ENCODE measurements at regions of chr22 and their contacts with region 1.

Region 1: GRCh38 chr22:39927544-39927943 is 26.7 kb downstream of the GRAP2 start:
- DNase-seq: peak; percentile 73
- ATAC-seq: peak; percentile 45
- H3K4me3 Mint-ChIP-seq: no peak overlapping the region
- H3K27ac Mint-ChIP-seq: no peak overlapping the region
- H3K4me1 Mint-ChIP-seq: peaks cover 30% of the 10 kb centered on the region
- H3K27me3 Mint-ChIP-seq: no peaks in the 10 kb centered on the region
- CTCF ChIP-seq: peak; percentile 67

Region 2: DNA sequence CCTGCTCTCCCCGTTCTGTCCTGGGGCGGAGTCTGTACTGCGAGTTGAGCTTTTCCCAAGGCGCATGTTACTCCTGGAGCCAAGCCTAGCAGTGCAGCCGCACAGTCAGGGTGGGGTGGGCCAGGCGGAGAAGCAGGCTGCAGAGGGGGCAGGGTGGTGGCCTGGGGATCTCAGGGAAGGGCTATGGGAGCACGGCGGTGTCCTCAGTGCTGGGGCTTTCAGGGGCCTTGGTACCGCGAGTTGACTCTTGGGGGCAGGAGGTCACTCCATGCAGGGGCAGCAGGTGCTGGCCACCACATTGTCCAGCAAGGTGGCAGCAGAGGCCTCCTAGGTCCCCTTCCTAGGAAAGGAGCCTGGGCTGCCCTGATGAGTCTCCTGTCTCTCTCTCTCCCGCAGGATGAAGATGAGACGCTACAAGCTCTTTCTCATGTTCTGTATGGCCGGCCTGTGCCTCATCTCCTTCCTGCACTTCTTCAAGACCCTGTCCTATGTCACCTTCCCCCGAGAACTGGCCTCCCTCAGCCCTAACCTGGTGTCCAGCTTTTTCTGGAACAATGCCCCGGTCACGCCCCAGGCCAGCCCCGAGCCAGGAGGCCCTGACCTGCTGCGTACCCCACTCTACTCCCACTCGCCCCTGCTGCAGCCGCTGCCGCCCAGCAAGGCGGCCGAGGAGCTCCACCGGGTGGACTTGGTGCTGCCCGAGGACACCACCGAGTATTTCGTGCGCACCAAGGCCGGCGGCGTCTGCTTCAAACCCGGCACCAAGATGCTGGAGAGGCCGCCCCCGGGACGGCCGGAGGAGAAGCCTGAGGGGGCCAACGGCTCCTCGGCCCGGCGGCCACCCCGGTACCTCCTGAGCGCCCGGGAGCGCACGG is 440.4 kb before region 1 on chr22:
- CTCF ChIA-PET with region 1: no interaction called
- POLR2A ChIA-PET with region 1: no interaction called
- intact Hi-C with region 1: no loop called
- DNase-seq: no peak
- ATAC-seq: no peak
- H3K4me3 Mint-ChIP-seq: no peak overlapping the region
- H3K27ac Mint-ChIP-seq: no peak overlapping the region
- H3K4me1 Mint-ChIP-seq: peaks cover 12% of the 10 kb centered on the region
- H3K27me3 Mint-ChIP-seq: no peaks in the 10 kb centered on the region
- CTCF ChIP-seq: no peak

Region 3: DNA sequence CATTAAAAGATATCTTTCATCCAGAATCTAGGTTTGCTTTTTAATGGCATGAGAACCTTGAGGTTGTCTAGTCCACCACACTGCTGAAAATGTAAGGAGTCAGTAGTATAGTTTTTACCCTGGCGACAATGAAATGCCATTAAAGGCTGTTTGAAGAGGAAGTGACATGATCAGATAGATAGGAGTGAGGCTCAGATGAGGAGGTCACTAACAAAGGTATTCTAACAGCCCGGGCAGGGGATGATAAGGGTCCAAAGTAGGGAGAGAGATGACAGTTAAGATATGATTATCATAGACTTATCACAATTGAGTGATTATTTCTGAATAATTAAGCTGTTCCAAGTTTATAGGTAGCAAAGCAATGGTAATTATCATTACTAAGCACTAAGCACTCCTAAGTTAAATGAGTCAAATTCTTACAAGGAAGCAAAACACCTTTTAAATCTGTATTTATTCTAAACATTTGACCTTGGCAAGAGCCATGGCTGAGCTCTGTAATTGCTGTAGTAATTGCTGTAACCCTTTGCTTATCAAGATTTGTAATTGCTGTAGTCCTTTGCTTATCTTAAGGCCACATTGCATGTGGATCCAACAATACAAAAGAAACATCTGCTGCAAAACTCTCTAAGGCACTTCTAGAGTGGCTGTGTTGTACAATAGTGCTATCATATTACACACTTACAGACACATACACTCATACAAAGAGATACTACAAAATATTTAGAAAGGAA is 126.6 kb before region 1 on chr22:
- CTCF ChIA-PET with region 1: no interaction called
- POLR2A ChIA-PET with region 1: no interaction called
- intact Hi-C with region 1: no loop called
- DNase-seq: no peak
- ATAC-seq: no peak
- H3K4me3 Mint-ChIP-seq: no peak overlapping the region
- H3K27ac Mint-ChIP-seq: no peak overlapping the region
- H3K4me1 Mint-ChIP-seq: peaks cover 7% of the 10 kb centered on the region
- H3K27me3 Mint-ChIP-seq: peaks cover 6% of the 10 kb centered on the region
- CTCF ChIP-seq: no peak

Region 4: DNA sequence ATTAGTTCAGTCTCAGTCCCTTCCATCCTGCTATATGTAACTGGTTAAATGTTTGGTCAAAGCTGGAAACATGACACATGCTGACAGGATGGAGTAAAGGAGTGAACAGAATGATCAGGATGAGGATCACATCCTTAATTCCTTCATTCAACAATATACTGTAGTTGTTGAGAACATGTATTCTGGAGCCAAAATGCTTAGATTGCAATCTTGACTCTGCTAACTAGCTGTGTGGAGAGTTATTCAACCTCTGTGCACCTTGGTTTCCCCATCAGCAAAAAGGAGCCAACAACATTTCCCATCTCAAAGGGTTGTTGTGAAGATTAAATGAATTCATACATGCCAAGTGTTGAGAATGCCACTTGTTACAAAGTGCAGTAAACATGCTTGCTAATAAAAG is 46.8 kb before region 1 on chr22:
- CTCF ChIA-PET with region 1: no interaction called
- POLR2A ChIA-PET with region 1: no interaction called
- intact Hi-C with region 1: no loop called
- DNase-seq: no peak
- ATAC-seq: no peak
- H3K4me3 Mint-ChIP-seq: no peak overlapping the region
- H3K27ac Mint-ChIP-seq: no peak overlapping the region
- H3K4me1 Mint-ChIP-seq: peaks cover 7% of the 10 kb centered on the region
- H3K27me3 Mint-ChIP-seq: no peaks in the 10 kb centered on the region
- CTCF ChIP-seq: no peak

Region 5: GRCh38 chr22:39900306-39901227 is 27.0 kb before region 1 on chr22 and contains the start of gene GRAP2:
- CTCF ChIA-PET with region 1: interaction called, 130 read pairs
- POLR2A ChIA-PET with region 1: interaction called, 270 read pairs
- intact Hi-C with region 1: no loop called
- DNase-seq: peak; percentile 83
- ATAC-seq: peak; percentile 89
- H3K4me3 Mint-ChIP-seq: peak within 1 kb of the TSS; percentile 80
- H3K27ac Mint-ChIP-seq: peak within 1 kb of the TSS; percentile 99
- H3K4me1 Mint-ChIP-seq: peaks cover 14% of the 10 kb centered on the region
- H3K27me3 Mint-ChIP-seq: no peaks in the 10 kb centered on the region
- CTCF ChIP-seq: no peak
- total RNA-seq, gene GRAP2: 83.2 to 86.8 TPM

Region 6: GRCh38 chr22:39908737-39909136 is 18.8 kb before region 1 on chr22:
- CTCF ChIA-PET with region 1: interaction called, 130 read pairs
- POLR2A ChIA-PET with region 1: interaction called, 270 read pairs
- intact Hi-C with region 1: loop called (anchors 2 kb)
- DNase-seq: peak; percentile 66
- ATAC-seq: peak; percentile 55
- H3K4me3 Mint-ChIP-seq: peak overlapping the region; percentile 80
- H3K27ac Mint-ChIP-seq: peak overlapping the region; percentile 92
- H3K4me1 Mint-ChIP-seq: peaks cover 61% of the 10 kb centered on the region
- H3K27me3 Mint-ChIP-seq: no peaks in the 10 kb centered on the region
- CTCF ChIP-seq: no peak

Region 7: GRCh38 chr22:39938509-39939111 is 11.1 kb after region 1 on chr22:
- CTCF ChIA-PET with region 1: interaction called, 50 read pairs
- POLR2A ChIA-PET with region 1: interaction called, 33 read pairs
- intact Hi-C with region 1: no loop called
- DNase-seq: peak; percentile 82
- ATAC-seq: peak; percentile 38
- H3K4me3 Mint-ChIP-seq: peak overlapping the region; percentile 72
- H3K27ac Mint-ChIP-seq: peak overlapping the region; percentile 90
- H3K4me1 Mint-ChIP-seq: peaks cover 92% of the 10 kb centered on the region
- H3K27me3 Mint-ChIP-seq: no peaks in the 10 kb centered on the region
- CTCF ChIP-seq: no peak

Region 8: GRCh38 chr22:40067639-40068038 is 140.1 kb after region 1 on chr22:
- CTCF ChIA-PET with region 1: no interaction called
- POLR2A ChIA-PET with region 1: no interaction called
- intact Hi-C with region 1: no loop called
- DNase-seq: no peak
- ATAC-seq: peak; percentile 48
- H3K4me3 Mint-ChIP-seq: no peak overlapping the region
- H3K27ac Mint-ChIP-seq: no peak overlapping the region
- H3K4me1 Mint-ChIP-seq: peaks cover 77% of the 10 kb centered on the region
- H3K27me3 Mint-ChIP-seq: no peaks in the 10 kb centered on the region
- CTCF ChIP-seq: no peak

Measured in activated CD8-positive, alpha-beta T cell treated with anti-CD3 and anti-CD28 coated beads for 36 hours (primary cell).